SK-N-SH (cell line): ENCODE measurements at regions of chr18 and their contacts with region 1.

Region 1: GRCh38 chr18:41905786-41906527 is 49.1 kb upstream of the PIK3C3 start:
- DNase-seq: peak; percentile 26
- H3K4me3 ChIP-seq: peak overlapping the region in 1 of 2 experiments; percentile 43; a peak in 2 of 4 replicates
- H3K27ac ChIP-seq: peak overlapping the region in 1 of 2 experiments; percentile 48; a peak in 3 of 4 replicates
- H3K4me1 ChIP-seq: no peaks in the 10 kb centered on the region; a peak in 2 of 4 replicates
- H3K27me3 ChIP-seq: no peaks in the 10 kb centered on the region
- CTCF ChIP-seq: no peak
- EP300 ChIP-seq: peak in 1 of 2 experiments; percentile 8; a peak in 1 of 4 replicates
- RAD21 ChIP-seq: no peak

Region 2: DNA sequence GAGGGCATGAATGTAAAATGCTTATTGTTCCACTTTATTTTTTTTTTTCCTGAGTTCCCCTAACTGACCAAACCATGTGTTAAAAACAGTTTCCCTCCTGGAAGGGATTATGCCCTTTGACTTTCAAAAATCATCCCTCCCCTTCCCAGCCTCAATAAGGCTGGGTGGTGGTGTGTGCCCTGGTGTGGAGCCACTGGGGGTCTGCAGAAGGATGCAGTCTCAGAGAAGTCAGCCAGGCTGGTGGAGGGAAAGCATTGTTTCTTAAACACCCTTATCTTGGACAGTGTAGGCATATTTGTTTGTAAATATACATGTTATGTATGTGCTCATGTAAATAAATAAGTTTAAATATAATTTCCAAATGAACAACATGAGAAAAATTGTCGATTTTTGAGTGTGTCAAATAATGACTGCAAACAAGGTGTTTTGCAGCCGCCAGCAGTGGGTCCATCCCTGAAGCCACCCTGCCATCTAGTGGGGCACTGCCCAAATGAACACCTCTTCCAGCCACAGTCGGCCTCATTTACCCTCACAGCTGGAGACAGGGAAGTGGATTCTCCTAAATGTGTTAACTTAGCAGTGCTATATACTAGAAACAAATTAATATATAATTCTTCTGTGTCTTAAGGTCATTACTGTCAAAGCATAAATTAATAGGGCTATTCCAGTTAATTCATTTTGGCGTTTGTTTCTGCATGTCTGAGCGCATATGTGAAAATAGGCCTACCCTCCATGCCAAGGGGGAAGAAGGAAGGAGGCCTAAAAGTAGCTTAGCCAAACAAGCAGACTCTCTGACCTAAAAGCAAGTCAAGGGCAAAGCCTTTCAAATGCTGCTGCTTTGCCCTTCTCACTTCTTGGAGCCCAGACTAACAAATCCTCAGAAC is 160.5 kb before region 1 on chr18:
- CTCF ChIA-PET with region 1: interaction called, 10 read pairs
- POLR2A ChIA-PET with region 1: no interaction called
- DNase-seq: peak; percentile 71
- H3K4me3 ChIP-seq: peak overlapping the region in 1 of 2 experiments; percentile 40; a peak in 1 of 4 replicates
- H3K27ac ChIP-seq: peak overlapping the region in 1 of 2 experiments; percentile 69; a peak in 2 of 4 replicates
- H3K4me1 ChIP-seq: peaks cover 0 to 7% of the 10 kb centered on the region in 2 experiments; a peak in 2 of 4 replicates
- H3K27me3 ChIP-seq: no peaks in the 10 kb centered on the region
- CTCF ChIP-seq: peak; percentile 84
- EP300 ChIP-seq: no peak
- RAD21 ChIP-seq: peak; percentile 98

Region 3: DNA sequence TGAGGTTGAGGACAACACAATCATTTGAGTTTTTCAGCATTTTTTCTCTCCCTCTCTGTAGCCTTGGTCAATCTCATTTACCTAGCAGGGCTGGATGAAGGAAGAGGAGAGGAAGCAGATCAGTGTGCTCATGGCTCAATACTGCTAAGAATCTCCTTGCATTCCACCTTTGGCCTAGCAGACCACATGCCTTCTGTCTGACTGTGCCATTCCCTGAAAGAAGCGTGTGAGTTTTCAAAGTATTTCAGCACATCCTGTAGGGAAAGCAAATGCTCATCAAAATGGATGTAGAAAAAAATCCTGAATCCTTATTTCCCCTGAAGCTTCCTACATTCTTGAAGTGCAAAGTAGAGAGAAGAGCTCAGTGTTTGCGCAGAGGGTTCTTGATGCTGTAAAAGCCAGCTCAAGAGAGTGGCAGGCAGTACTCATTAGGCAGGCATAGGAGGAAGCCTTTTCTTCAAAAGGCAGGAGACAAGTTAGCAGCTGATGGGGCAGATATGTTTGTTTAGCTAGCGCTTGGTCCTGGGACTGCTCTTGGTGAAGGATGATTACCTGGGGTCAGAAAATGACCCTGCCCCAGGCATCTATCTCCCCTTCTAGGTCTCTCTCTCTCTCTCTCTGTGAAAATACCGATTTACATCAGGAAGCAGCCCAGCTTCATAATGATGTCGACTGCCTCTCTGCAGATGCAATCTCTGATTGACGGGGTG is 34.7 kb after region 1 on chr18:
- CTCF ChIA-PET with region 1: no interaction called
- POLR2A ChIA-PET with region 1: no interaction called
- DNase-seq: no peak
- H3K4me3 ChIP-seq: no peak overlapping the region
- H3K27ac ChIP-seq: peak overlapping the region; percentile 62 to 92; a peak in 3 of 4 replicates
- H3K4me1 ChIP-seq: peaks cover 0 to 57% of the 10 kb centered on the region in 2 experiments; a peak in 2 of 4 replicates
- H3K27me3 ChIP-seq: no peaks in the 10 kb centered on the region
- CTCF ChIP-seq: no peak
- EP300 ChIP-seq: peak in 1 of 2 experiments; percentile 76; a peak in 2 of 4 replicates
- RAD21 ChIP-seq: no peak